H1 (cell line): ENCODE measurements at regions of chr3 and their contacts with region 1.

Region 1: GRCh38 chr3:14203521-14204079 is 25.0 kb downstream of the LSM3 start:
- DNase-seq: peak in 1 of 2 experiments; percentile 65
- H3K4me3 ChIP-seq: no peak overlapping the region
- H3K27ac ChIP-seq: no peak overlapping the region
- H3K4me1 ChIP-seq: no peaks in the 10 kb centered on the region; a peak in 2 of 7 replicates
- H3K27me3 ChIP-seq: no peaks in the 10 kb centered on the region
- CTCF ChIP-seq: peak; percentile 46 to 96 (median 89)
- EP300 ChIP-seq: no peak
- POLR2A ChIP-seq: no peak
- RAD21 ChIP-seq: peak; percentile 90 to 92

Region 2: GRCh38 chr3:14178247-14179113 is 25.1 kb before region 1 on chr3 and contains the starts of genes LSM3 and XPC:
- CTCF ChIA-PET with region 1: interaction called, 25 read pairs
- POLR2A ChIA-PET with region 1: interaction called, 12 read pairs
- DNase-seq: peak; percentile 85 to 96
- H3K4me3 ChIP-seq: peak within 1 kb of the TSS; percentile 84 to 91 (median 88)
- H3K27ac ChIP-seq: peak within 1 kb of the TSS; percentile 91
- H3K4me1 ChIP-seq: peaks cover 0 to 2% (median under 1%) of the 10 kb centered on the region in 4 experiments; a peak in 3 of 7 replicates
- H3K27me3 ChIP-seq: no peaks in the 10 kb centered on the region; a peak in 1 of 7 replicates
- CTCF ChIP-seq: no peak
- EP300 ChIP-seq: no peak
- POLR2A ChIP-seq: peak; percentile 69 to 94
- RAD21 ChIP-seq: no peak
- total RNA-seq, gene LSM3: 24.8 and 25.4 TPM in 2 replicates
- total RNA-seq, gene XPC: 27.3 and 27.7 TPM in 2 replicates

Region 3: DNA sequence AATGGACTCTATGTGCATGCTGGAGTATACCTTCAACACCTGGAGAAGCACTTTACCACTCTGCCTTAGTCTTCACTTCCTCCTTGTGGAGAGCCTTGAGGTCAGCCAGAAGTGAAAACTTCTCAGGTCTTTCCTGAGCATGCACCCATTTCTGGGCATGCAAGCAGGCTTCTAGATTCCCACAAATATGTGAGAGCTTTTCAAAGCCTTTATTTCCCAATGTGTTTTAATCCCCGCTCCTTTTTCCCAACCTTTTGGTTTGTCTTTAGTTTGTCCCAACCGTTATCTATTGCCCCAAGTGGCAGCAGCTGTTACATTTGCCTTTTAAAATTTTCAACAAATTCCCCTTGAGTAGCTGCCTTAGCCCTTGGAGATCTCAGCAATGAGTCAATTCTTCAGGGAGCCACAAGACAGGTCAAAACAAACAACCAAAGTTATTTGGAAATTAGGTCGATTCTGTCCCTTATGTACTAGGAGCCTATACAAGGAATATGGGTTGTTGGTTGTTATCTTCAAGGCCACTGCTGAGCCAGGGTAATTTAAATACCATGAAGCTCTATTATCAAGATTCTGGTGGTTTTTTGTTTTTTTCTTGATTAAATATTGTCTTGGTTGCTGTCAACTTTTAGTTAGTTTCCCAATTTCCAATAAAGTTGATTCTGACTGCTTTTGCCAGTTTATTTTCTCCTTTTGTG is 19.4 kb after region 1 on chr3:
- CTCF ChIA-PET with region 1: interaction called, 157 read pairs
- POLR2A ChIA-PET with region 1: no interaction called
- DNase-seq: no peak
- H3K4me3 ChIP-seq: no peak overlapping the region
- H3K27ac ChIP-seq: no peak overlapping the region
- H3K4me1 ChIP-seq: peaks cover 0 to 5% (median 0%) of the 10 kb centered on the region in 4 experiments; a peak in 1 of 7 replicates
- H3K27me3 ChIP-seq: no peaks in the 10 kb centered on the region
- CTCF ChIP-seq: no peak
- EP300 ChIP-seq: no peak
- POLR2A ChIP-seq: no peak
- RAD21 ChIP-seq: no peak

Region 4: GRCh38 chr3:14261229-14261628 is 57.6 kb after region 1 on chr3:
- CTCF ChIA-PET with region 1: interaction called, 21 read pairs
- POLR2A ChIA-PET with region 1: no interaction called
- DNase-seq: peak in 1 of 2 experiments; percentile 97
- H3K4me3 ChIP-seq: no peak overlapping the region
- H3K27ac ChIP-seq: no peak overlapping the region
- H3K4me1 ChIP-seq: peaks cover 0 to 7% (median 0%) of the 10 kb centered on the region in 4 experiments; a peak in 1 of 7 replicates
- H3K27me3 ChIP-seq: 0 out of 7 replicates have a peak, but pooled peaks cover 0 to 3% (median 0%) of the 10 kb centered on the region in 4 experiments
- CTCF ChIP-seq: peak; percentile 95
- EP300 ChIP-seq: no peak
- POLR2A ChIP-seq: no peak
- RAD21 ChIP-seq: peak; percentile 99

Region 5: GRCh38 chr3:14391033-14391432 is 187.4 kb after region 1 on chr3:
- CTCF ChIA-PET with region 1: interaction called, 10 read pairs
- POLR2A ChIA-PET with region 1: no interaction called
- DNase-seq: no peak
- H3K4me3 ChIP-seq: no peak overlapping the region
- H3K27ac ChIP-seq: no peak overlapping the region
- H3K4me1 ChIP-seq: peaks cover 0 to 5% (median 3%) of the 10 kb centered on the region in 4 experiments; a peak in 6 of 7 replicates
- H3K27me3 ChIP-seq: no peaks in the 10 kb centered on the region
- CTCF ChIP-seq: no peak
- EP300 ChIP-seq: no peak
- POLR2A ChIP-seq: no peak
- RAD21 ChIP-seq: no peak

Region 6: DNA sequence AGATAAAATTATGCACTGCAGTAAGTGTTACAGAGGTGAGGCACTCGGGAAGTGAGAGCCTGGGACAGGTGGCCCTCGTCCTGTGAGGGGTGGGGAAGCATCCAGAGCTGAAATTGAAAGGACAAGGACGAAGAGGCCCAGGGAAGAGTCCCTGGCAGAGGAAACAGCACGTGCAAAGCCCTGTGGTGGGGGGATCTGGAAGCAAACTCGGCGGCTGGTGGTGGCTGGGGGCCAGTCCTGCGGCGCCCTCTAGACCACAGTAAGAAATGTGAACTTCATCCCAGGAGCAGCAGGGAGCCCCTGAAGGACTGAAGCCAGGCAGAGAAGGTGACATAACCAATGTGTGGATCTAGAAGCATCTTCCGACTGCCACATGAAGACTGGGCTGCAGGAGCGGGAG is 293.7 kb after region 1 on chr3:
- CTCF ChIA-PET with region 1: interaction called, 27 read pairs
- POLR2A ChIA-PET with region 1: no interaction called
- DNase-seq: no peak
- H3K4me3 ChIP-seq: no peak overlapping the region
- H3K27ac ChIP-seq: no peak overlapping the region
- H3K4me1 ChIP-seq: no peaks in the 10 kb centered on the region
- H3K27me3 ChIP-seq: no peaks in the 10 kb centered on the region
- CTCF ChIP-seq: peak; percentile 29 to 53 (median 43); a peak in 3 of 4 replicates
- EP300 ChIP-seq: no peak
- POLR2A ChIP-seq: no peak
- RAD21 ChIP-seq: peak; percentile 63 to 73